Activated T-helper 2 cell treated with anti-CD3 and anti-CD28 coated beads, Interferon-gamma antibody, Interleukin-2, Interleukin-4, amounts not matched to agents 10 μg/mL and 5 μg/mL and 100 μg/mL, durations not matched to agents 14 hours and 24 hours and 36 hours (primary cell): ENCODE measurements at regions of chr5 and their contacts with region 1.

Region 1: DNA sequence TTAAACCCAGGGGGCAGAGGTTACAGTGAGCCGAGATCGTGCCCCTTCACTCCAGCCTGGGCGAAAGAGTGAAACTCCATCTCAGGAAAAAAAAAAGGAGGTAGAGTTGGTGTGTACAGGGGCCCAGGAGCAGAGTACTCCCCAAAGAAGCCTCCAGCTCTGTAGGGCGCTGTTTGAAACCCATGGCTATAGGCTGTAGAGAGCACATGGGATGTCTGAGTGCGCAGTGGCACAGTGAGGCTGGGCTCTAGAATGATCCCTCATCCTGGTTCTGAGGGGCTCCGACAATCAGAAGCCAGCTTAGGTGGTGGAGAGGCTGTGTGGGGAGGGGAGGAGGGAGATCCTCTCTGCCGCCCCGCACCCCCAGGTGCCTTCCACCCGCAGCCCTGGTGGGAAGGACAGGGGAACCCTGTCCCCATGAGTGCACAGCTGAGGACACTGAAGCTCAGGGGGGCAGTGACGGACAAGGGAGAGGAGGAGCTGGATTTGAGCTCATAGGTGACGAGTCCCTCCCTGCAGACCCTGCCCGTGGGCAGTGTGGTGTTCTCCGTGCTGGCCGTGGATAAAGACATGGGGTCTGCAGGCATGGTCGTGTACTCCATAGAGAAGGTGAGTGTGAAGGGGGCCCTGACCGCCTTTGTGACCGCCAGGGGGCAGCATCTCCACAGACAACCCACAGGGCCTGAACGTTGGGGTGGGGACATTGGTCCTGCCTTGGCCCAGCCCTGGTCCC is 24.6 kb downstream of the CDHR2 start:
- DNase-seq: peak; percentile 57
- H3K4me3 Mint-ChIP-seq: no peak overlapping the region
- H3K27ac Mint-ChIP-seq: no peak overlapping the region
- H3K4me1 Mint-ChIP-seq: no peaks in the 10 kb centered on the region
- H3K27me3 Mint-ChIP-seq: peaks cover 5% of the 10 kb centered on the region

Region 2: GRCh38 chr5:176596689-176597416 is 23.1 kb after region 1 on chr5:
- intact Hi-C with region 1: loop called (anchors 2 kb)
- DNase-seq: peak; percentile 52
- H3K4me3 Mint-ChIP-seq: peak overlapping the region; percentile 73
- H3K27ac Mint-ChIP-seq: no peak overlapping the region
- H3K4me1 Mint-ChIP-seq: peaks cover 2% of the 10 kb centered on the region
- H3K27me3 Mint-ChIP-seq: peaks cover 4% of the 10 kb centered on the region

Region 3: GRCh38 chr5:176629853-176630712 is 56.4 kb after region 1 on chr5 and contains the starts of genes EIF4E1B and SNCB:
- intact Hi-C with region 1: loop called (anchors 10 kb)
- DNase-seq: peak; percentile 37
- H3K4me3 Mint-ChIP-seq: peak within 1 kb of the TSS; percentile 3
- H3K27ac Mint-ChIP-seq: no peak within 1 kb of the TSS
- H3K4me1 Mint-ChIP-seq: peaks cover 12% of the 10 kb centered on the region
- H3K27me3 Mint-ChIP-seq: peaks cover 74% of the 10 kb centered on the region
- total RNA-seq, gene EIF4E1B: not detected in 2 replicates
- total RNA-seq, gene SNCB: not detected in 2 replicates